ENCODE measurements at regions of chr3 and their contacts with region 1.

Region 1: GRCh38 chr3:152241142-152242017 is 27.3 kb upstream of the MBNL1 start:
- DNase-seq: no peak
- H3K4me3 Mint-ChIP-seq: peak overlapping the region; percentile 57
- H3K27ac Mint-ChIP-seq: peak overlapping the region; percentile 70
- H3K4me1 Mint-ChIP-seq: peaks cover 81% of the 10 kb centered on the region
- H3K27me3 Mint-ChIP-seq: no peaks in the 10 kb centered on the region

Region 2: DNA sequence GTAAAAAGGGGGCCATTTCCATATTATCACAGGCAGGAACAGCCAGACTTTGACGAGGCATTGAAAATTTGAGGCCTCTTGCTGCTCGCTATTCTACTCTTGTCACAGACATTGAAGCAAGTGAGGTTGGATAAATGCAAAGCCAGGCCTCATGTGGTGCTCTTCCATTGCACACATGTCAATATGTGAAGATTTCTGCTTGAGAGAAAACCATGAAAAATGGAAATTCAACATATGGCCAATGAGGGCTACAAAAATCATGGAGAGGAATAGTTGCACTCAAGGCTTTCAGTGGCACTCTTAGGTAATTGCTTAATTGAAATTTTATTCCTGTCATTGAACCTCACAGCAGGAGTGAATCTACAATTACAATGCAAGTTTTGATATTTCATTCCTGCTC is 158.2 kb before region 1 on chr3:
- intact Hi-C with region 1: no loop called
- DNase-seq: no peak
- H3K4me3 Mint-ChIP-seq: no peak overlapping the region
- H3K27ac Mint-ChIP-seq: no peak overlapping the region
- H3K4me1 Mint-ChIP-seq: no peaks in the 10 kb centered on the region
- H3K27me3 Mint-ChIP-seq: peaks cover 8% of the 10 kb centered on the region

Region 3: DNA sequence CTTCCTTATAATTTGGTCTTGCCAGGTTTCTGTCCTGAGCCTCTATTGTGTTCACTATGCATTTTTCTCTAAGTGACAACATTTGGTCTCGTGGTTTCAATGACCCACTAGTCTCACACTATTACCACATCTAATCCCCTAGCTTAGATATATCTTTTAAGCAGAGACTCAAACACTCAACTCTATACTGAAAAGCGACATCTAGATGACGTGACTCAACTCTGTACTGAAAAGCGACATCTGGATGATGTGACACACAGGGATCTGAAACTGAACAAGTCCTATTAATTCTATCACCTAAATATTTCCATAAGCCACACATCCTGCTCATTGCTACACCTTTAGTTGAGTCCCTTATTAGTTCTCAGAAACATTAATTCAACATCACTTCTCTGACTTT is 114.3 kb before region 1 on chr3:
- intact Hi-C with region 1: loop called (anchors 1 kb)
- DNase-seq: no peak
- H3K4me3 Mint-ChIP-seq: no peak overlapping the region
- H3K27ac Mint-ChIP-seq: peak overlapping the region; percentile 49
- H3K4me1 Mint-ChIP-seq: peaks cover 28% of the 10 kb centered on the region
- H3K27me3 Mint-ChIP-seq: peaks cover 19% of the 10 kb centered on the region

Region 4: DNA sequence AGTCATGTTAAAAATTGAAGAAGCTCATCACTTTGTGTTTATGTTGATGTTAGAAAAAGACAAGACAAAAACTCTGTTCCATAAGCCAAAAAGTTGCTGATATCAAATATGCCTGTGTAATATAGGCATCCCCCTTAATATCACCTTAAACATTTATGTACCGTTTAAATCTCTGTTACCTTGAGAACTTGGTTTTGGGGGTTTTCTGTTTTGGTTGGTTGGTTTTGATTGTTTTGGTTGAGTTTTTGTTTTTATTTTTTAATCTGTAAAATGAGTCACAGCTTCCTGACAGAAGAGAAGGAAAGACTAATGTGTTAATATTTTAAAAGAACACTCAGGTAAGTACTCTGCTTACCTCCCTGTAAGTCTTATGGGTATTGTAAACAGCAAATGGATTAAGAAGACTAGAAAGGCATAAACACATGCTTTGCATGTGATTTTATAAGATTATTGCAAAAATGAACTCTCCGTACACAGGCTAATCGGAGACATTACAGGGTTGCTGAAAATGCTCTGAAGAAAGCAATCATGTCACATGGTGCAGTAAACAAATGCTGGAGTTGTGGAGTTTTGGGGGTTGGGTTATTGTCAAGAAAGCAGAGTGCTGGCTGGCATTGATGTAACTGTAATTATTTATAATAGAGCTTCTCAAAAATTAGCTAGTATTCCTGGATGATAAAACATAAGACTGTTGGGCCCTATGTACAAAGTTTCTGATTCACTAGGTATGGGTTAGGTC is 42.1 kb before region 1 on chr3:
- intact Hi-C with region 1: loop called (anchors 1 kb)
- DNase-seq: no peak
- H3K4me3 Mint-ChIP-seq: peak overlapping the region; percentile 76
- H3K27ac Mint-ChIP-seq: peak overlapping the region; percentile 90
- H3K4me1 Mint-ChIP-seq: peaks cover 84% of the 10 kb centered on the region
- H3K27me3 Mint-ChIP-seq: no peaks in the 10 kb centered on the region

Region 5: DNA sequence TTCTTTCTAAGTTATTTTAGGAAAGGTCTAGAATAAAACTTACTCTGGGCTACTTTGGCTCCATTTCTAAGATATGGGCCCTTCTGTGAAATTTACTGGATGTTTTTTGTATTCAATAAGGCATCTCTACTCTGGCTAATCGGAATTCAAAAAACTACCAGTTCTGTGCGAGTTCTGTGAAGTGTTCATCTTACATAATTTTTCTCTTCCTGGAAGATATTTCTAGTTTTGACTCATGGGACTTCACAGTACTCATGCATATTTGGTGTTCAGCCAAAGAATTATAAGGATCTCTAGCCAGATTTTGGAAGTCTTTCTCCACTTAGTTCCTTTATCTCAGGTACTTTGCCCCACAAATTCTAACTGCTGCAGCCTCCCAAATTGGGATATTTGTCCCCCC is 19.1 kb before region 1 on chr3:
- intact Hi-C with region 1: loop called (anchors 1 kb)
- DNase-seq: no peak
- H3K4me3 Mint-ChIP-seq: peak overlapping the region; percentile 38
- H3K27ac Mint-ChIP-seq: peak overlapping the region; percentile 81
- H3K4me1 Mint-ChIP-seq: peaks cover 74% of the 10 kb centered on the region
- H3K27me3 Mint-ChIP-seq: no peaks in the 10 kb centered on the region

Region 6: DNA sequence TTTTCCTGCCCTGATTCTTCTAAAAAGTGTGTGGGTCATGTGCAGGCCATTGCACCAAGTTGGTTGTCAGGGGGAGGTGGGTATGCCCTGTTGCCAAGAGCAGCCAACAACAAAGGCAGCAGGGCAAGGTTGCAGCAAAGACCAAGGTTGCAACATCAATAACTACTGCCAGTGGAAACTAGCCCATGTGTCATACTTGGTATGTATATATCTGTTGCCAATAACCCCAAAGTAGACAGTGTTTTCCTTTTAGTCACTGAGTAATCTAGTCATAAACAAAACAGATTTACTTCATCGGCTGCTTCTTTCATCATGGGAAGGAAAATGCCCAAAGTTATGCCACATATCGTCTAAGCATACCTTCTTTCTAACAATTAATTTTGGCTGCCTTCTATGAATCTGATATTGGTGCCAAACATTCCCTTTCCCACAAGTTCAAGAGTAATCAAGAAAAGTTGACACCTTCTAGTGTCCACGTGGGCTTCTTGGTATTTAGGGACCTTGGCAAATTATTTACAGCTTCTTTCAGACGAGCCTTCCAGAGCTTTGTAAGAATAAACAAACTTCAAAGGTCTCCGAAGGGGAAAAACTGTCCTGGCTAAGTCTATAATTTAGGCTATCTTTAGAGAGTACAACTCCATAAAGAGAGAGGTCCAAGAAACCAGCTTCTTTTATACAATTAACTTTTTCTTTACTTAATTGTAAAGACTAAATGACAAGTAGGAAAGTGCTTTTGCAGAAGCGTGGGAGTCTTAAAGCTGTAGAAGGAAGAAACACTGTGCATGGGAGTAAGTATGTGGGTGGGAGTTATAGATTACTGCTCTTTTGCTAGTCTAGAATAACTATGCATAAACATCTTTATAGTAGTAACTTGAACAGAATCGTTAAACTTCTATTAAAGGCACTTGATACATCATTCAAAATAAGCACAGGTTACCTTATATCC is 17.3 kb after region 1 on chr3:
- intact Hi-C with region 1: loop called (anchors 1 kb)
- DNase-seq: peak; percentile 62
- H3K4me3 Mint-ChIP-seq: peak overlapping the region; percentile 81
- H3K27ac Mint-ChIP-seq: peak overlapping the region; percentile 98
- H3K4me1 Mint-ChIP-seq: peaks cover 90% of the 10 kb centered on the region
- H3K27me3 Mint-ChIP-seq: no peaks in the 10 kb centered on the region